Right ventricle myocardium inferior (tissue), 1 donor: ENCODE measurements at regions of chr12 and their contacts with region 1.

Region 1: DNA sequence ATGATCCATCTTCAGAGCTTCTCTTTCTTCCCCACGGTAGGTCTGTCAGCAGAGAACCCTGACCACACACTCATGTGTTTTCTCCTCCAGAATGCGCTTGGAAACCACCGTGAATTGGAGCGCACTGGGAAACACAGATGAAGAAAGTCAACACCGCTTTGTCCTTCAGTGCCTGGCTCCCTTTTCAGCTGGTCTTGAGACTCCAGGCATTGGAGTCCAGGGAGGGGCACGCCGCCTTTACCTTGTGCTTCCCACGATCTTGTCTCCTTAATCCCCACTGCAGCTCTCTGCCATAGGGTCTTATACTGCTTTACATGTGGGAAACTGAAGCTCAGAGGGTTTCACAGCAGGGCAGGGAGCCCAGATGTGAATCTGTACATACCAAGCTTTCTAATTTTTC is 1.1 kb downstream of the FAM90A1 start:
- DNase-seq: no peak
- ATAC-seq: no peak

Region 2: GRCh38 chr12:8108808-8109398 is 117.5 kb before region 1 on chr12:
- intact Hi-C with region 1: loop called (anchors 5 kb)
- DNase-seq: no peak
- ATAC-seq: no peak

Region 3: DNA sequence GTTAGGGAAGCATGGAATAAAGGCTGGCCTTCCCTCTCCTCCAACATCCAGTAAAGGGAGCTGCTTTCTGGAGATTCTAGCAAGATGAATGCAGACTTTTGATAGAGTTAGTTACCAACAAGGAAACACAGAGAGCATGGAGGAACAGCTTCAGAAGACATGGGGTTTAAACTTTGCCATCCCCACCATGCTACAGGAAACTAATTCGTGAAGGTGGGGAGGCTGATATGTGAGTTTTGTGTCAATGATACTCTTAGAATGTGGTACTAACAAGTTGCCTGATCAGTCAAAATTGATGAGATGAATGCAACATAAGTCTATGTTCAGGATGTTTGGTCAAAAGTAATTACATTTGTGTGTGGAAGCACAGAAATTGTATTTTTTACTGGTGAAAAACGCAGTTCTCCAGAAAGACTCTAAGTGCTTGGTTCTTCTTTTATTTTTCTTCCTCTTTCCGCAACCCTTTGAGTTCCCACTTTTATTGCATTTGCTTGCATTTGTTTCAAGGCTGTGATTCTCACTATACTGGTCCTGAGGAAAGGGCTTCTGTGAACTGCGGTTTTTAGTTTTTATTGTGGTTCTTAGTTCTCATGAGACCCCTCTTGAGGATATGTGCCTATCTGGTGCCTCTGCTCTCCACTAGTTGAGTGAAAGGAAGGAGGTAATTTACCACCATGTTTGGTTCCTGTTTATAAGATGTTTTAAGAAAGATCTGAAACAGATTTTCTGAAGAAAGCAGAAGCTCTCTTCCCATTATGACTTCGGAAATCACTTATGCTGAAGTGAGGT is 103.0 kb before region 1 on chr12 and contains the start of gene CLEC4A:
- intact Hi-C with region 1: no loop called
- DNase-seq: no peak
- ATAC-seq: no peak
- total RNA-seq, gene CLEC4A: 1.2 TPM

Region 4: GRCh38 chr12:9001233-9001632 is 774.9 kb after region 1 on chr12:
- intact Hi-C with region 1: no loop called
- DNase-seq: no peak
- ATAC-seq: no peak